Ascending aorta (tissue), 2 donors: ENCODE measurements at regions of chr17 and their contacts with region 1.

Region 1: GRCh38 chr17:8138672-8139371 is 13.4 kb downstream of the PER1 start:
- DNase-seq: peak; percentile 86 to 98
- H3K4me3 ChIP-seq: peak overlapping the region; percentile 11 to 36
- H3K27ac ChIP-seq: peak overlapping the region; percentile 77
- H3K4me1 ChIP-seq: peaks cover 4 to 16% of the 10 kb centered on the region in 2 donors
- H3K27me3 ChIP-seq: no peaks in the 10 kb centered on the region
- CTCF ChIP-seq: peak; percentile 82 to 91 (median 87)

Region 2: GRCh38 chr17:8151123-8151640 is 12.4 kb after region 1 on chr17:
- intact Hi-C with region 1: loop called (anchors 1 kb)
- DNase-seq: peak; percentile 85 to 96
- H3K4me3 ChIP-seq: peak overlapping the region; percentile 80 to 90
- H3K27ac ChIP-seq: peak overlapping the region; percentile 99
- H3K4me1 ChIP-seq: peaks cover 15 to 43% of the 10 kb centered on the region in 2 donors
- H3K27me3 ChIP-seq: no peaks in the 10 kb centered on the region
- CTCF ChIP-seq: no peak

Region 3: GRCh38 chr17:8162233-8162996 is 23.6 kb after region 1 on chr17 and contains the start of gene VAMP2:
- intact Hi-C with region 1: loop called (anchors 1 kb)
- DNase-seq: peak in 1 of 2 donors; percentile 92
- H3K4me3 ChIP-seq: peak within 1 kb of the TSS; percentile 91 to 100
- H3K27ac ChIP-seq: peak within 1 kb of the TSS; percentile 99 to 100
- H3K4me1 ChIP-seq: peaks cover 21 to 42% of the 10 kb centered on the region in 2 donors
- H3K27me3 ChIP-seq: no peaks in the 10 kb centered on the region
- CTCF ChIP-seq: no peak
- total RNA-seq, gene VAMP2: 28.3 TPM

Region 4: DNA sequence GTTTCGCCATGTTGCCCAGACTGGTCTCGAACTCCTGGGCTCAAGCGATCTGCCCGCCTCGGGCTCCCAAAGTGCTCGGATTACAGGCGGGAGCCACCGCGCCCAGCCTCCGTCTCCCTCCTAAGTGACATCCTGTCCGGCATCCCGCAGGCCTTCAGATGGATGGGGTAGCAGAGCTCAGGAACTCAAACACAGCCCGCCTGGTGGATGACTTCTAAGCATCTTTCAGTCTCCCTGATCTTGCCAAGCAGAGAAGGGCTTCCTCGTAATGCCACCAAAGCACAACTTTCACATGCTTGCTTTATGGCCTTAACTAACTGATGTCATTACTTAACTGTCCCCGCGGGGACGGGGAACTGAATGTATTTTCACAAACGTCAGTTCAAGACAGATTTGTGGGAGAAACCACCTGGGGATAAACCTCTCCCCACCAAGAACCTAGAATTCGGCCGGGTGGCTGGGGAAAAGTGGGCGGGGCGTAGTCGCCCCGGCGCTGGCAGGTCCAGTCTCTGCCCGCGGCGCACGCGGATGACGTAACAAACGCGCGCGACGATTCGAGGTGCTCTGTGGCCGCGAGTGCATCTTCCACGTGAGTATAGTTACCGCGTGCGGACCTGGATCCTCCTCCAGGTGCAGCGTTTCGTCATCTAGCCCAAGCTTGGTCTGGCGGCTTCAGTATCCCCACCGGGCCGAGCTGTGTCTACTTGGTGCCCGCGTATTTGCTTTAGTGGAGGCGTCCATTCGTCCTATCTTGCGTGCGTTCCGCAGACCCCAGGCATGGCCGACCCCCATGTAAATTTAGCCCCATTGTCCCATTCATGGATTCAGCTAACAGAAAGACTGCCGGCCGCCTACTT is 110.2 kb after region 1 on chr17 and contains the start of gene PFAS:
- intact Hi-C with region 1: loop called (anchors 2 kb)
- DNase-seq: peak; percentile 75 to 98
- H3K4me3 ChIP-seq: peak within 1 kb of the TSS; percentile 80 to 82
- H3K27ac ChIP-seq: peak within 1 kb of the TSS; percentile 94 to 98
- H3K4me1 ChIP-seq: peaks cover 0 to 6% of the 10 kb centered on the region in 2 donors
- H3K27me3 ChIP-seq: no peaks in the 10 kb centered on the region
- CTCF ChIP-seq: peak in 1 of 3 experiments; percentile 20
- total RNA-seq, gene PFAS: 108 TPM